ENCODE measurements at regions of chr1 and their contacts with region 1.

Region 1: DNA sequence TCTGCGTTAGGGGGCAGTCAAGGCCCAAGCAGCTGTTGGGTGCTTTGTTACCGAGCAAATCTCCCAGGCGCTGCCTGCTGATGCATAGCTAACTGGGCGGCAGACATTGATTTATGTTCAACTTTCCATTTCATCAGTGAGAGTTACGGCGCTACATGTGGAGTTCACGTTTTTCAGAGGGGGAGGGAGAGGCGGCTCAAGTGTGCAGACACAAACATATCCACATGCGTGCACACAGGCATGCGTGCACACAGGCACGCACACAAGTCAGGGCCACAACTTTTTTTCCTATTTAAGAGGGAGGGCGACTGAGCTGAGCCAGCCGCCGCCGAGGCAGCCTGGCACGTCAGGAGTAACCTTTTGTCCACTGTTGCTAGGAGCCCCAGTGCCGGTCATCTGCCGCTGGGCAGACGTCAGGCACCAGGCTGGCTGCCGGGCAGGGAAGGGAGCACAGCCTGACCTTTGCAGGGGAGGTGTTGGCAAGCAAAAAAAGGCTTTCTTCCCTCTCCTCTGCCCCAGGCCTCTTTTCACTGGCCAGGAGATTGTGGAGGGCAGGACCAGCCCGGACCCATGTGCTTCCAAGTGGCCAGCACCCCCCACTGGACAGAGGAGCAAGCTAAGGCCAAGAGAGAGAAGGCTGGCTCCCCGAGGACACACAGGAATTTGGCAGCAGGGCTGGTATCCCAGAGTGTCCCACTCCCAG is 73.3 kb downstream of the MRPL37 start:
- DNase-seq: peak; percentile 79 to 86 (median 79)
- ATAC-seq: peak; percentile 53 to 76
- H3K4me3 ChIP-seq: no peak overlapping the region
- H3K27ac ChIP-seq: peak overlapping the region; percentile 81
- H3K4me1 ChIP-seq: peaks cover 43% of the 10 kb centered on the region
- H3K27me3 ChIP-seq: no peaks in the 10 kb centered on the region

Region 2: DNA sequence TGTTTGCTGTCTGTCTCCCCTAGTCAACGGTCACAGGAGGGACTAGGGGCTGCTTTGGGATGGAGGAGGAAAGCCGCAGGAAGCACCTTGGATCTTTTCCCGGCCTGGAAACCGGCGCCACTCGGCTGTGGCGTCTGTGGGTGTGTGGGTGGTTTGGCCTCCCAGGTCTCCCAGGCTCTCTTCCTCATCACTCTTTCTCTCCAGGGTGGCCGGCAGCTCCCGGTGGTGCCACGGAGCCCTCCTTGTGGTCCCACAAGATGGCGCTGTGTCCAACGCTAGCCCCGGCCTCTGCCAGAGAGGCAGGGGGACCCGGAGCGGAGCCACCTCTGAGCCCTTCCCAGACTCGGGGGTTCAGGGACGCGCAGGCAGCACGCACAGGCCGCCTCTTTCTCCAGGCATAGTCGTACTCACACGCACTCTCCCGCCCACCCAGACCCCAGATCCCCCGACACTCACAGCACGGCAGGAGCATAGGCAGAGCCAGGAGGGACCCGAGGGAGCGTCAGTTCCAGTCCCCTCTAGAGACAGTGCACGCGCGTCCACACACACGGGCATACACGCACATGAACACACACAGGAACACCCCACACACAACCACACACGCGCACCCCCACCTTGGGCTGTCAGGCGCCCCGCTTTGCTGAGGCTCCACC is 151.6 kb before region 1 on chr1:
- intact Hi-C with region 1: loop called in 1 of 4 experiments (anchors 10 kb)
- DNase-seq: peak; percentile 84 to 91 (median 90)
- ATAC-seq: peak; percentile 90 to 91
- H3K4me3 ChIP-seq: peak overlapping the region; percentile 13
- H3K27ac ChIP-seq: no peak overlapping the region
- H3K4me1 ChIP-seq: no peaks in the 10 kb centered on the region
- H3K27me3 ChIP-seq: no peaks in the 10 kb centered on the region